A549 (cell line): ENCODE measurements at regions of chr10 and their contacts with region 1.

Region 1: DNA sequence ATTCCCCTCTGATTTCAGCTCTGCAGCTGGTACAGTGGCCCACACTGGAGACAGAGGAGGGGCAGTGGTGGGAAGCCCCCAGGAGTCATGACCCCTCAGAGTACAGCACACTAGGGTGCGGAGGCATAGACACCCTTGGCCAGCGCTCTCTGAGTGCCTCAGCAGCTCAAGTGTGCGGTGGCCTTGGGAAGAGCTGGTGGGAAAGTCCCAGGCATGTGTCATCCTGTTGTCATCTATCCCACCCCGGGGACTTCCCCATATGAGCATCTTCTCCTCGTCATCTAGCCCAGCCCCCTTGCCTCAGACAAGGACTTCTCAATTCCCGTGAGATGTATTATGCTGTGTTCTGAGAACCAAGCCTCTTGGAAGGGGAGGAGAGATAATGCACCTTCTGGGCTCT is 15.6 kb upstream of the PPIF start:
- DNase-seq: peak; percentile 73 to 80
- ATAC-seq: peak; percentile 54 to 71; a peak in 5 of 6 replicates
- H3K4me3 ChIP-seq: no peak overlapping the region
- H3K27ac ChIP-seq: peak overlapping the region in 1 of 2 experiments; percentile 35; a peak in 1 of 6 replicates
- H3K4me1 ChIP-seq: peaks cover 17% of the 10 kb centered on the region
- CTCF ChIP-seq: no peak
- EP300 ChIP-seq: no peak
- POLR2A ChIP-seq: no peak
- RAD21 ChIP-seq: no peak

Region 2: DNA sequence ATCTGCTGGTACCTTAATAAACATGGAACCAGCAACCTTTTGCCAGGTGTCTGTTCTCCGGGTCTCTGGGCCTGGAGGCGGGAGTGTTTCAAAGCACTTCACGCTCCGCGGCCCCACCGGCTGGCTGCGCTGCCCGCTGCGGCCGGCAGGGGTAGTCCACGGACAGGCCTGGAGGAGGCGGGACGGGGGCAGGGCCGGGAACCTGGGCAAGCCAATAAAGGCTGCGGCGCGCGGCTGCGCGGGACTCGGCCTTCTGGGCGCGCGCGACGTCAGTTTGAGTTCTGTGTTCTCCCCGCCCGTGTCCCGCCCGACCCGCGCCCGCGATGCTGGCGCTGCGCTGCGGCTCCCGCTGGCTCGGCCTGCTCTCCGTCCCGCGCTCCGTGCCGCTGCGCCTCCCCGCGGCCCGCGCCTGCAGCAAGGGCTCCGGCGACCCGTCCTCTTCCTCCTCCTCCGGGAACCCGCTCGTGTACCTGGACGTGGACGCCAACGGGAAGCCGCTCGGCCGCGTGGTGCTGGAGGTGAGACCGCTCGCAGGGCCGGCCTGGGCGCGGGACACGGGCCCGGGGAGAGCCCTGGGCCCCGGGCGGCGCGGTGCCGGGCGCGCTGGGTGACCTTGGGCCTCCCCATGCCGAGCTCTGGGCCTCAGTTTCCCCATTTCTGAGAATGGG is 15.7 kb after region 1 on chr10 and contains the start of gene PPIF:
- CTCF ChIA-PET with region 1: interaction called, 37 read pairs
- POLR2A ChIA-PET with region 1: interaction called, 3 read pairs
- DNase-seq: peak; percentile 74 to 91
- ATAC-seq: peak; percentile 86 to 90
- H3K4me3 ChIP-seq: peak within 1 kb of the TSS; percentile 84
- H3K27ac ChIP-seq: peak within 1 kb of the TSS; percentile 89 to 97
- H3K4me1 ChIP-seq: peaks cover 18% of the 10 kb centered on the region
- CTCF ChIP-seq: peak; percentile 88
- EP300 ChIP-seq: no peak
- POLR2A ChIP-seq: peak; percentile 89
- RAD21 ChIP-seq: peak; percentile 50 to 70; a peak in 4 of 5 replicates
- polyA plus RNA-seq, gene PPIF: 44.8 and 51.9 TPM in 2 replicates

Region 3: DNA sequence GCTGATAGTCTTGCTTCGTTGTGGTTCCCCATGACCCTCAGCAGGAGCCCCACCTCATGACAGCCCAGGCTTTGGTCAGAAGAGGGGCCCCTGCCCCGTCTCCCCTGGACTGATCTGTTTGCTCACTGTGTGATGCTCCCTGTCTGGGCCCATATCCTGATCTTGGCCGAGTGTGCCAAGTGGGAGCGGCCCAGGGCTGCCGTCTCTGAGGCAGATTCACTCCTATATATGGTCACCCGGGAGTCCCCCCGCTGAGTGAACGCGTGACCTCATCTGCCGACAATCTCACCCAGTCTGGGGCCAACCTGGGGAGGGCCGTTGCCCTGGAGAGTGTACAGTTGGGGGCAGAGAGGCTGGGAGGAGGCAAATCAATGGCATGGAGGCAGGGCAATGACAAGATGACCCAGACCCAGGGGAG is 50.1 kb after region 1 on chr10:
- CTCF ChIA-PET with region 1: no interaction called
- POLR2A ChIA-PET with region 1: no interaction called
- DNase-seq: peak in 1 of 2 experiments; percentile 65
- ATAC-seq: peak; percentile 48 to 82; a peak in 5 of 6 replicates
- H3K4me3 ChIP-seq: no peak overlapping the region
- H3K27ac ChIP-seq: peak overlapping the region; percentile 30 to 55; a peak in 3 of 6 replicates
- H3K4me1 ChIP-seq: peaks cover 28% of the 10 kb centered on the region
- CTCF ChIP-seq: no peak
- EP300 ChIP-seq: no peak
- POLR2A ChIP-seq: no peak
- RAD21 ChIP-seq: no peak